Activated CD4-positive, alpha-beta memory T cell treated with anti-CD3 and anti-CD28 coated beads for 36 hours (primary cell): ENCODE measurements at regions of chr18 and their contacts with region 1.

Region 1: GRCh38 chr18:1585879-1586488 is 681.3 kb downstream of the ADCYAP1 start:
- DNase-seq: no peak
- H3K4me3 Mint-ChIP-seq: no peak overlapping the region
- H3K27ac Mint-ChIP-seq: no peak overlapping the region
- H3K4me1 Mint-ChIP-seq: no peaks in the 10 kb centered on the region
- H3K27me3 Mint-ChIP-seq: peaks cover 3% of the 10 kb centered on the region

Region 2: GRCh38 chr18:864872-865273 is 721.1 kb before region 1 on chr18:
- CTCF ChIA-PET with region 1: no interaction called
- POLR2A ChIA-PET with region 1: no interaction called
- intact Hi-C with region 1: loop called (anchors 10 kb)
- DNase-seq: peak; percentile 77
- H3K4me3 Mint-ChIP-seq: no peak overlapping the region
- H3K27ac Mint-ChIP-seq: no peak overlapping the region
- H3K4me1 Mint-ChIP-seq: peaks cover 4% of the 10 kb centered on the region
- H3K27me3 Mint-ChIP-seq: peaks cover 10% of the 10 kb centered on the region

Region 3: GRCh38 chr18:1150344-1150743 is 435.6 kb before region 1 on chr18:
- CTCF ChIA-PET with region 1: no interaction called
- POLR2A ChIA-PET with region 1: no interaction called
- intact Hi-C with region 1: no loop called
- DNase-seq: no peak
- H3K4me3 Mint-ChIP-seq: no peak overlapping the region
- H3K27ac Mint-ChIP-seq: no peak overlapping the region
- H3K4me1 Mint-ChIP-seq: no peaks in the 10 kb centered on the region
- H3K27me3 Mint-ChIP-seq: no peaks in the 10 kb centered on the region

Region 4: GRCh38 chr18:2083691-2084090 is 497.7 kb after region 1 on chr18:
- CTCF ChIA-PET with region 1: interaction called, 3 read pairs
- POLR2A ChIA-PET with region 1: no interaction called
- intact Hi-C with region 1: loop called (anchors 10 kb)
- DNase-seq: peak; percentile 15
- H3K4me3 Mint-ChIP-seq: no peak overlapping the region
- H3K27ac Mint-ChIP-seq: no peak overlapping the region
- H3K4me1 Mint-ChIP-seq: no peaks in the 10 kb centered on the region
- H3K27me3 Mint-ChIP-seq: no peaks in the 10 kb centered on the region

Region 5: DNA sequence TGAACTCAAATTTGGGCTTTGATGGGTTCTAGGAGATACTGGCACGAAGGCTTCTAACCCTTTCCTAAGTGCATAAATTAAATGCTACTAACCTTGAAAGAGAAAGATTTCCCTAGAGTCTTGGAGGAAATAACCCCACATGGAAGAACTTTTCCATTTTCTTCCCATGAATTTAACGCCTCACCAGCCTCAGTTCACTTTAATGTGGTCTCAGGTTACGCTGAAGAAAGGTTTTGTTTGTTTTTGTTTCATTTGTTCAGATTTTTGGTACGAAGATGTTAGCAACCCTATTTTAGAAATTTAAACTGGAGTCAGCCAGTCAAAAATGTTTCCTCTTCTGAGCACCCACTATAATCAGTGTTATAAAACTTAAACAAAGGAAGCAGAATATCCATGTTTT is 954.6 kb after region 1 on chr18:
- CTCF ChIA-PET with region 1: no interaction called
- POLR2A ChIA-PET with region 1: no interaction called
- intact Hi-C with region 1: loop called (anchors 5 kb)
- DNase-seq: no peak
- H3K4me3 Mint-ChIP-seq: no peak overlapping the region
- H3K27ac Mint-ChIP-seq: no peak overlapping the region
- H3K4me1 Mint-ChIP-seq: peaks cover 2% of the 10 kb centered on the region
- H3K27me3 Mint-ChIP-seq: no peaks in the 10 kb centered on the region